ENCODE measurements at regions of chr2 and their contacts with region 1.

Region 1: DNA sequence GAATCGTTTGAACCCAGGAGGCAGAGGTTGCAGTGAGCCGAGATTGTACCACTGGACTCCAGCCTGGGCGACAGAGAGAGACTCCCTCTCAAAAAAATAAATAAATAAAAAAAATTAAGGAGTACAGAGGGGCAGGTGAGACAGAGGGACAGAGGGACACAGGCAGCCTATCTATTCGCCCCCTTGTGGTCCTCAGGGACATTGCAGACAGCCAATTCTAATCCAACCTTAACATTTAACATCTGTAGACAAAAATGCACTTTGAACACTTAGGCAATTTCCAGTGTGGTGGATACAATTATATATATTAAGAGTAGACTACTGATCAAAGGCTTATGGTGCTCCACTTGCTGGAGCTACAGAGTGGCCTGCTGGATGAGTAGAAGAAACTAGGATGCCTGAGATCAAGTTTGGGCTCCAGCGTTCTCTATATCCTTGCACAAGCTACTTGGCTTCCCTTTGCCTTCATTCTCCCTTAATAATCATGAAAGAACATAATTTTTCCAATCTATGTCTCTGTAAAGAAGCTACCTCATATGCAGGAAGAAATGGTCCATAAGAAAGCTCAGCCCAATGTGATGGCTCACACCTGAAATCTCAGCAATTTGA is 8.2 kb upstream of the SMARCAL1 start:
- DNase-seq: peak in 2 of 5 donors; percentile 23 to 27
- ATAC-seq: peak in 2 of 4 donors; percentile 52 to 62
- H3K4me3 ChIP-seq: no peak overlapping the region
- H3K27ac ChIP-seq: no peak overlapping the region
- H3K4me1 ChIP-seq: no peaks in the 10 kb centered on the region
- H3K27me3 ChIP-seq: peaks cover 0 to 7% (median 0%) of the 10 kb centered on the region in 9 donors
- CTCF ChIP-seq: peak; percentile 72 to 85 (median 80)
- POLR2A ChIP-seq: no peak

Region 2: DNA sequence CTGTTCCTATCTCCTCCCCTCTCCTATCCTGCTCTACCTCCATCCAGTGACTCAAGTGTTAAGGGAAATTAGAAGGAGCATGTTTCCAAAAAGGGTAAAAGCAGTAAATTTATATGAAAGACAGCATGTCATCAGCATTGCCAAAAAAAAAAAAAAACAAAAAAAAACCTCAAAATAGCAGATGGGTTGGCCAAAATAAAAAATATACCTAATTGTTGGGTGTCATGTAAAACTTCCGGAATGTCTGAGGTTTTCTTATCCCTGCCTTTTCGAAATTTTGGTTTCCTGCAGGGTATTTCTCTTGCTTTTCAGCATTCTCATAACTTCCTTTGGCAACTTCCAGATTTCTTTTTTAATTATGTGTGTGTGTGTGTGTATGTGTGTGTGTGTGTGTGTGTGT is 726.6 kb before region 1 on chr2:
- intact Hi-C with region 1: no loop called
- DNase-seq: no peak
- ATAC-seq: no peak
- H3K4me3 ChIP-seq: no peak overlapping the region
- H3K27ac ChIP-seq: no peak overlapping the region
- H3K4me1 ChIP-seq: peaks cover 0 to 21% (median 0%) of the 10 kb centered on the region in 12 donors
- H3K27me3 ChIP-seq: no peaks in the 10 kb centered on the region
- CTCF ChIP-seq: no peak
- POLR2A ChIP-seq: no peak

Region 3: DNA sequence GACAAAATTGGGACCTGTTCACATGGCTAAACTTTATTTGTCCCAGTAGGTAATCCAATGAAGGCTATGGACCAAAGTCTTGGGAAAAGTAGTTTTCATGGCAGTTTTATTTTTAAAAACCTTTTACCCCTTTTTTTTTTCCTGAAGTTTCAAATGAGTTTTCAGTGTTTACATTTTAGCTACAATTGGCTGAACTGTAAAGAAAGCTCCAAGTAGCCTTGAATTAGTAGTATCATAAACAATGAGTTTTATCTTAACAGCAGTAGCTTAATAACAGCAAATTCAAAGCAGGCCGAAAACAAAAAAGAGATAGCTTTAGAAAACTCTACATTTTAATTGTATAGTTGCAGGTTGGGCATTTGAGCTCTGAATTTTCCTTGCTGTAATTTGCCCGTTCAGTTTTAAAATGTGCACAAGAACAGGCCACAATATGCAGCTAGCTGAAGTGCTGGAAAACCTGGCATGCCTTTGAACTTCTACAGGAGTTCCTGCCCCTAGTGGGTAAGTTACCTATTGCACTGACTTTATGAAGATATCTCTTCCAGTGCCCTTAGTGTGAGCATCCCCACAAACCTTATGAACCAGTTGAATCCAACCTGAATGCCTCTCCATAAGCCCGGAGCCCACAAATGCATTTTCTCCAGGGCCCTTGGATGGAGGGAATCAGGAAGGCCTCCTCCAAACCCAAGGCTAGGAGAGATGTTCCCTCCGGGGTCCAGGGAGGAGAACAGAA is 188.3 kb before region 1 on chr2:
- intact Hi-C with region 1: loop called in 6 of 10 experiments (anchors 10 kb)
- DNase-seq: no peak
- ATAC-seq: no peak
- H3K4me3 ChIP-seq: no peak overlapping the region
- H3K27ac ChIP-seq: peak overlapping the region in 1 of 12 donors; percentile 2
- H3K4me1 ChIP-seq: peaks cover 0 to 20% (median 4%) of the 10 kb centered on the region in 12 donors
- H3K27me3 ChIP-seq: no peaks in the 10 kb centered on the region
- CTCF ChIP-seq: peak in 3 of 12 donors; percentile 12 to 18 (median 14)
- POLR2A ChIP-seq: no peak

Measured in heart left ventricle (tissue), 16 donors.